ENCODE measurements at regions of chr15 and their contacts with region 1.

Region 1: GRCh38 chr15:98311566-98312188 is 336.7 kb upstream of the IGF1R start:
- DNase-seq: peak in 1 of 2 experiments; percentile 90
- H3K4me3 ChIP-seq: no peak overlapping the region
- H3K27ac ChIP-seq: no peak overlapping the region
- H3K4me1 ChIP-seq: no peaks in the 10 kb centered on the region
- H3K27me3 ChIP-seq: no peaks in the 10 kb centered on the region
- CTCF ChIP-seq: peak in 2 of 3 experiments; percentile 66 to 78; a peak in 3 of 4 replicates
- EP300 ChIP-seq: no peak
- POLR2A ChIP-seq: no peak
- RAD21 ChIP-seq: peak; percentile 67 to 74

Region 2: GRCh38 chr15:97978401-97979139 is 333.1 kb before region 1 on chr15:
- CTCF ChIA-PET with region 1: no interaction called
- POLR2A ChIA-PET with region 1: no interaction called
- DNase-seq: no peak
- H3K4me3 ChIP-seq: no peak overlapping the region
- H3K27ac ChIP-seq: no peak overlapping the region
- H3K4me1 ChIP-seq: no peaks in the 10 kb centered on the region
- H3K27me3 ChIP-seq: no peaks in the 10 kb centered on the region
- CTCF ChIP-seq: no peak
- EP300 ChIP-seq: no peak
- POLR2A ChIP-seq: no peak
- RAD21 ChIP-seq: no peak

Region 3: DNA sequence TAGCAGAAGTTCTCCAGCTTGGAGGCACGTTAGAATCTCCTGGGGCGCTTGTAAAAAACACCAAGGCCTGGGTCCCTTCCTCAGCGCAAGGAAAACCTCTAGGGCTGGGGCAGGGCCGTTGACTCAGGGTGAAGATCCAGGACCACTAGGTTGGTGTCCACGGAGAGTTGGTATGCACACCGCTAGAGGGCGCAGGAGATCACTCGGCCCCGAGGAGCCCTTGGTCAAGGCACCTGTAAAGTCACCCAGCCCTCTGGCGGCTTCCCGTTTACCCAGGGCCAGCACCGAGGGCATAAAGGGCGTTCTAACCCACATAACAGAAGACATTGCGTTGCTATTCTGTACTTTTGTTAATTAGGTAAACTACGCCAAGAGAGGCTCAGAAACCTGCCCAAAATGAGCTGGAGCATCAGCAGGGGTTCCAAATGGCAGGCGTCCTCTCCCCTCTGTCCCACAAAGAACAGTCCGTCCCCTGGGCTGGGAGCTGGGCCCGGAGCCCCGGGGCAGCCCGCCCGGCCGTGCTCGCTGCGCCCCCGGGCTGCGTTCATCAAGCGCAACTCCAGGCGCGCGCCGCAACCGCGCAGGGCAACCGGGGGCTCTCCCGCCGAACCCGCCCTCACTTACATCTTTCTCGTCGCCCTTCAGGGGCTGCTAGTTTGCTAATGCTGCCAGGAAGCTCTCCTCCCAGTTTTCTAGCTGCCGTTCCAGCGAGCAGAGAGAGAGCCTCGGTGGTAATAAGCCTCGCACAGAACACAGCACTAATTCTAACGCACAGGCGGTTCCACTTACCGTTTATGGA is 19.0 kb before region 1 on chr15:
- CTCF ChIA-PET with region 1: interaction called, 10 read pairs
- POLR2A ChIA-PET with region 1: no interaction called
- DNase-seq: peak; percentile 54 to 93
- H3K4me3 ChIP-seq: peak overlapping the region; percentile 32 to 70 (median 34)
- H3K27ac ChIP-seq: no peak overlapping the region
- H3K4me1 ChIP-seq: no peaks in the 10 kb centered on the region; a peak in 2 of 7 replicates
- H3K27me3 ChIP-seq: peaks cover 0 to 13% (median 9%) of the 10 kb centered on the region in 4 experiments; a peak in 6 of 7 replicates
- CTCF ChIP-seq: peak; percentile 94 to 96 (median 94)
- EP300 ChIP-seq: no peak
- POLR2A ChIP-seq: no peak
- RAD21 ChIP-seq: peak; percentile 53 to 66

Region 4: GRCh38 chr15:98347001-98347400 is 35.3 kb after region 1 on chr15:
- CTCF ChIA-PET with region 1: interaction called, 11 read pairs
- POLR2A ChIA-PET with region 1: no interaction called
- DNase-seq: no peak
- H3K4me3 ChIP-seq: no peak overlapping the region
- H3K27ac ChIP-seq: no peak overlapping the region
- H3K4me1 ChIP-seq: no peaks in the 10 kb centered on the region
- H3K27me3 ChIP-seq: no peaks in the 10 kb centered on the region
- CTCF ChIP-seq: no peak
- EP300 ChIP-seq: no peak
- POLR2A ChIP-seq: no peak
- RAD21 ChIP-seq: no peak

Region 5: DNA sequence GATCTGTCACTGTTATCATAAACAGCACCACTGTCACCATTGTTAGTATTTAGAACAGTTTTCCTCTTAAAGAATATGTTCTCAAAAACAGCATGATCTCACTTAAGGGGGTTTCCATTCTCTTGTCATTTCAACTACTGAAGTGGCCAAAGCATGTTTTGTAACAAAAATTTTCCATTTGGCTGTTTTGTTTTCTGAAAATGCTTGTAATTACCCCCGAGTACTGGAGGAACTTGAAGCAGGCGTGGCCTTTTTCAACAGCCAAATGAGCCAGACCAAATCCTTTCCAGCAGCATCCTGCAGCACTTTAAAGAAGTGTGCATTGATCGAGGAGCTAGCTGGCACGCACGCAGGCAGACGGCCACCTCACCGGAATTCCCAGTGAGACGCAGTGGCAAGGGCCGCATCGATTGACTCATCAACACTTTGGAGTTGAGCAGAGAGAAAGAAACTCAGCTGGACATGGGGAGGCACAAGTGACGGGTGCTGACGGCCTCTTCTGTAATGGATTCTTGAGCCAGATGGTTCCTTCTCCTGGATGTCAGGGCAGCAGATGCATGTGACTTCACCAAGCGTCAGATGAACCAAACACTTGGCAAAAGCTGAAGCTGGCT is 102.4 kb after region 1 on chr15:
- CTCF ChIA-PET with region 1: interaction called, 58 read pairs
- POLR2A ChIA-PET with region 1: no interaction called
- DNase-seq: no peak
- H3K4me3 ChIP-seq: no peak overlapping the region
- H3K27ac ChIP-seq: no peak overlapping the region
- H3K4me1 ChIP-seq: 0 out of 7 replicates have a peak, but pooled peaks cover 0 to 3% (median 0%) of the 10 kb centered on the region in 4 experiments
- H3K27me3 ChIP-seq: no peaks in the 10 kb centered on the region
- CTCF ChIP-seq: no peak
- EP300 ChIP-seq: no peak
- POLR2A ChIP-seq: no peak
- RAD21 ChIP-seq: no peak

Region 6: DNA sequence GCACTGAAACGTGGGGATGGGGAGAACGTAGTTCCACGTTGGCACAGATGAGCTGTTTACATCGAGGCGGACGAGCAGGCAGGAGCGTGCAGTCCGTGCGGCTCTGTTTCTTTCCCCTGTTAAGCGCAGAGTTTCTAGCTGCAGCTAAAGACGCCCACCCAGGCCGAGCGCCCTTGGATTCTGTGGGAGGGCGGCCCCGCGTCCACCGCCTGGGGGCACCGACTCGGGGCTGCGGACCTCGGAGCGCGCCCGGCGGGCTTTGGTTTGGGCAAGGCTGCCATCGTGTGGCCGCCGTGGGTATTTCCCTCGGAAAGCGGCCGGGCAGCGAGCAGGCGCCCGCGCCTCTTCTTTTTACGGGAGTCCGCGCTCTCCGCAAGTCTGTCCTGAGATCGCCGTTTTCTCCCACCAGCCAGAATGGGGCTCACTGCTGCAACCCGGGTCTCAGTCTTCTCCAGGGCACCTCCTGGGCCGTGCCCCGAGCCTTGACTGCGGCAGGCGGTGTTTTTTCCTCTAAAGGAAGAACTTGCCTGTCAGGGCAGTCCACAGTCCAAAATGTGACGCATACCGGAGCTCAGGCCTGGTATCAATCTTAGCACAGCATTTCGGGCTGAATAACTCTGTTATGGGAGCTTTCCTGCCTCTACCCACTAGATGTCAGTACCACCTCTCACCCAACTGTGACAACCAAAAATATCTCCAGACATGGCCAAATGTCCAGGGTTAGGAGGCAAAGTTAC is 116.7 kb after region 1 on chr15:
- CTCF ChIA-PET with region 1: interaction called, 21 read pairs
- POLR2A ChIA-PET with region 1: no interaction called
- DNase-seq: peak; percentile 49 to 97
- H3K4me3 ChIP-seq: peak overlapping the region; percentile 11 to 54 (median 24); a peak in 5 of 8 replicates
- H3K27ac ChIP-seq: no peak overlapping the region
- H3K4me1 ChIP-seq: peaks cover 0 to 2% (median under 1%) of the 10 kb centered on the region in 4 experiments; a peak in 2 of 7 replicates
- H3K27me3 ChIP-seq: peaks cover 3 to 26% (median 18%) of the 10 kb centered on the region in 4 experiments
- CTCF ChIP-seq: peak; percentile 63 to 90 (median 66)
- EP300 ChIP-seq: no peak
- POLR2A ChIP-seq: no peak
- RAD21 ChIP-seq: peak; percentile 72 to 87